Activated CD8-positive, alpha-beta T cell treated with anti-CD3 and anti-CD28 coated beads, Interleukin-2, amount 10 ng/mL, durations not matched to agents 7 days and 5 days (primary cell): ENCODE measurements at regions of chr14 and their contacts with region 1.

Region 1: DNA sequence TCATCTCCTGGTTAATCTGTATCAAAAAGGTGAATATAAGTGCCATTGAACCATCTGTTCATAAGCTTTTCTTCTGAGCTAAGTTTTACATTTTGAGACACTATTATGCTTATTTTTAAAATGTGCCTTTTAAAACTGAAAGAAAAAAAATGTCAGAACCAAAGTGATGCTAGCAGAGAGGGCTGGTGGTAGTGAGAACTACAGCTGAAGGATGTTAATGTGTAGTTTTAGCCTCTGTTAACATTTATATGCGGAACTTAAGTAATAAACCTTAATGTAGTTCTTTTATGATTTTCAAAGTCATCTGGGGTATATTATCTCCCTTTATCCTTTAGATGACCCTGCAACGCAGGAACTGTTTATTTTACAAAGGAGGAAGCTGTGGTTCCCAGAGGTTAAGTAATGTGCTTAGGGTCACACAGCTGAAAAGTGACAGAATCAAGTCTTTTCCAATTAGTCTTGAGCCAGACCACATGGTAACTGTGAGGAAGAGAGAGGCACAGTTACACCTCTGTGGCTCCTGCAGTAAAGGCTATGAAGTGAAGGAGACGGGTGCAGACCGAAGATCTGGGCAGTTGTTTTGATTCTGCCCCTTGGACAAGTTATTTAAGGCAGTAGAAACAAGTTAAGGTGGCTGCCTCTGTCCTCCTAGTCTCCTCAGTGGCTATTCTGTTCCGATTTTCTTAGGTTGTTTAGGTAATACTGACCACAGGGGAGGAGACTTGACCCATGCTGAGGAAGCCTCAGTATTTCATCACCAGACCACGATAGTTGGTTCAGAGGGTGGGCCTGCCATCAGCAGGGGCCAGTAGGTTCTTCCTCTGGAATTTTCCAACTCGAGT is 23.9 kb downstream of the GNG2 start:
- DNase-seq: no peak
- ATAC-seq: peak; percentile 58
- H3K4me3 Mint-ChIP-seq: peak overlapping the region; percentile 48
- H3K27ac Mint-ChIP-seq: peak overlapping the region; percentile 61
- H3K4me1 Mint-ChIP-seq: peaks cover 78% of the 10 kb centered on the region
- H3K27me3 Mint-ChIP-seq: no peaks in the 10 kb centered on the region

Region 2: DNA sequence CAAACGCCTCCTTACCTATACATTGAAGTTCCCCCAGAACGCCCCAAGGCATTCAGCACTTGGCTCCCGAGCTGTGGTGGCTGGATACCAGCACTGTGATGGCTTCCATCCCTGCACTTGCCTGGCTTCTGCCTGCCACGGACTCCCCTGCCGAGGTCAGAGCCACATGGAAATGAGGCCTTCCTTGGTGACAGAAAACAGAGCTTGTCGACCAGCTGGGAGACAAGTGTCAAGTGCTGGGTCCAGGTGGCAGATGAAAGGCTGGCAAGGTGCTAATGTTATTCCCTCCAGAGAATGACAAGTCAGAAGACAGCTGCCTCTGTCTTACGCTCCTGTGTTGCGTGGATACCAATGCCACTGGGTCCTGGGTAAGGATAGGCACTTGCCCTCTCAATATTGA is 50.1 kb before region 1 on chr14:
- CTCF ChIA-PET with region 1: no interaction called
- POLR2A ChIA-PET with region 1: no interaction called
- DNase-seq: no peak
- ATAC-seq: no peak
- H3K4me3 Mint-ChIP-seq: no peak overlapping the region
- H3K27ac Mint-ChIP-seq: no peak overlapping the region
- H3K4me1 Mint-ChIP-seq: no peaks in the 10 kb centered on the region
- H3K27me3 Mint-ChIP-seq: no peaks in the 10 kb centered on the region

Region 3: GRCh38 chr14:51860164-51860824 is 24.0 kb before region 1 on chr14 and contains the start of gene GNG2:
- CTCF ChIA-PET with region 1: interaction called, 9 read pairs
- POLR2A ChIA-PET with region 1: interaction called, 19 read pairs
- DNase-seq: peak; percentile 93
- ATAC-seq: peak; percentile 97
- H3K4me3 Mint-ChIP-seq: peak within 1 kb of the TSS; percentile 96
- H3K27ac Mint-ChIP-seq: peak within 1 kb of the TSS; percentile 95
- H3K4me1 Mint-ChIP-seq: peaks cover 48% of the 10 kb centered on the region
- H3K27me3 Mint-ChIP-seq: no peaks in the 10 kb centered on the region
- total RNA-seq, gene GNG2: 293 to 302 TPM

Region 4: DNA sequence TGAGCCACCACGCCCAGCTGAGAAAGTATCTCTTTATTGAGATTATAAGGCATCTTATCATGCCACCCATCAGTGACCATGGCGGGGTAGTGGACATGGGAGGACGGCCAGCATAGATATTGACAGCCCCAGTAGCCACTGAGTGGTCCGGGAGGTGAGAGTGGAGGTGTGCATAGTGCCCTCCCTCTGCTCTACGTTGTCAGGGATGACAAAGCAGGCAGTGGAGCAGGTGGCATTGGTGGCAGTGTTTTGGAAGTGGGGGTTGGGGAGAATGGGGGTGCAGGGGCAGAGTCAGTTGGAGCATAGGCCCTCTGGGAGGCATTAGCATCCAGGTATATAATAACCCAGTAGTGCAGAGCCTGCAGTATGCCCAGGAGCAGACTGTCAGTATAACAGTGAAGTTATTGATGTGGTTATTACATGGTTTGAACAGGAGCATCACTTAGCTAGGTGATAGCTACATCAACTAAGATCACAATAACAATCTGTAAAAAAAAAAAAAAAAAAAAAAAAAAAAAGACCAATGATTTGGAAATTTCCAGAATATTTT is 17.2 kb after region 1 on chr14:
- CTCF ChIA-PET with region 1: interaction called, 12 read pairs
- POLR2A ChIA-PET with region 1: no interaction called
- DNase-seq: no peak
- ATAC-seq: peak; percentile 70
- H3K4me3 Mint-ChIP-seq: no peak overlapping the region
- H3K27ac Mint-ChIP-seq: peak overlapping the region; percentile 9
- H3K4me1 Mint-ChIP-seq: peaks cover 42% of the 10 kb centered on the region
- H3K27me3 Mint-ChIP-seq: no peaks in the 10 kb centered on the region

Region 5: GRCh38 chr14:51908086-51908485 is 23.8 kb after region 1 on chr14:
- CTCF ChIA-PET with region 1: interaction called, 12 read pairs
- POLR2A ChIA-PET with region 1: no interaction called
- DNase-seq: no peak
- ATAC-seq: no peak
- H3K4me3 Mint-ChIP-seq: no peak overlapping the region
- H3K27ac Mint-ChIP-seq: no peak overlapping the region
- H3K4me1 Mint-ChIP-seq: peaks cover 66% of the 10 kb centered on the region
- H3K27me3 Mint-ChIP-seq: no peaks in the 10 kb centered on the region